ENCODE measurements at regions of chr11 and their contacts with region 1.

Region 1: DNA sequence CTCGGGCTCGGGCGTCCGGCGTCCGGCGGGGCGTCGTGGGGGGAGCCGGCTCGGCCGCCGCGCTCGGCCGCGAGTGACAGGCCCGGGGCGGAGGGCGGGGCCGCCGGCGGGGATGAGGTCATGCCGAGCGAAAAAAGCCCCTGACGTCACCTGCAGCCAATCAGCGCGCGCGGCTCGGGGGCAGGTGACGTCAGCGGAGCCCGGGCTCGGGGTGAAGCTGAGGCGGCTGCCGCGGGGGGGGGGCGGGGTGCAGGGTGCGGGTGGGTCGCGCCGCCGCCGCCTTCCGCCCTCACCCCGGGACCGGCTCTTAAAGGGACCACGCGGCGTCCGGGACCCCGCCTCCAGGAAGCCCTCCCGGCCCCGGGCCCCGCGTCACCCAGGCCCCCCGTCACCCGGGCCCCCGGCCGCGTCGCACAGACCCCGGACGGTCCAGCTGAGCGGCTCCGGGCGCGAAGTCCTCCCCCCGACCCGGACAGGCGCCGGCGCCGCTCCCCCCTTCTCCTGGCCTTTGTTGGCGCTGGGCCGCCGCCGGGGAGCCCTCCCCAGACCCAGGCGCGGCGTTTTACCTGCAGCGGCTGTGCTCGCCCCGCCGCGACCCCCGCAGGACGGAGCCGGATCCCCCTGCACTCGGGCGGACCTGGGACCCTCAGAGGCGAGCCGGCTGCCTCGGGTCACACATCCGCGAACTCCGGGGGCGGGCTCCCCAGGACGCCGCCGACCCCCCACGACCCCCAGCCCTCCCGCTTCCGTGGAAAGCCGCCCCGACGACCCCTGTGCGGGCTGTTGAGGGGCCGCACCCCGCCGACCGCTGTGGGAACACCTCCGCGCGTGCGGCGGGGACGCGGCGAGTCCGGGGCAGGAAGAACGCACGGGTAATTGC is at the start of gene DUSP8:
- DNase-seq: peak; percentile 91 to 97 (median 94)
- ATAC-seq: peak; percentile 74
- H3K4me3 ChIP-seq: peak within 1 kb of the TSS; percentile 63
- H3K4me3 Mint-ChIP-seq: peak within 1 kb of the TSS; percentile 7 to 87 (median 82)
- H3K27ac ChIP-seq: peak within 1 kb of the TSS; percentile 90
- H3K27ac Mint-ChIP-seq: peak within 1 kb of the TSS in 7 of 9 donors; percentile 43 to 91 (median 84)
- H3K4me1 ChIP-seq: peaks cover 25 to 32% of the 10 kb centered on the region in 2 donors
- H3K4me1 Mint-ChIP-seq: peaks cover 2 to 22% (median 9%) of the 10 kb centered on the region in 7 donors
- H3K27me3 ChIP-seq: no peaks in the 10 kb centered on the region
- H3K27me3 Mint-ChIP-seq: peaks cover 0 to 41% (median 3%) of the 10 kb centered on the region in 5 donors
- total RNA-seq, gene DUSP8: 0.41 to 79.3 (median 4.4) TPM

Region 2: DNA sequence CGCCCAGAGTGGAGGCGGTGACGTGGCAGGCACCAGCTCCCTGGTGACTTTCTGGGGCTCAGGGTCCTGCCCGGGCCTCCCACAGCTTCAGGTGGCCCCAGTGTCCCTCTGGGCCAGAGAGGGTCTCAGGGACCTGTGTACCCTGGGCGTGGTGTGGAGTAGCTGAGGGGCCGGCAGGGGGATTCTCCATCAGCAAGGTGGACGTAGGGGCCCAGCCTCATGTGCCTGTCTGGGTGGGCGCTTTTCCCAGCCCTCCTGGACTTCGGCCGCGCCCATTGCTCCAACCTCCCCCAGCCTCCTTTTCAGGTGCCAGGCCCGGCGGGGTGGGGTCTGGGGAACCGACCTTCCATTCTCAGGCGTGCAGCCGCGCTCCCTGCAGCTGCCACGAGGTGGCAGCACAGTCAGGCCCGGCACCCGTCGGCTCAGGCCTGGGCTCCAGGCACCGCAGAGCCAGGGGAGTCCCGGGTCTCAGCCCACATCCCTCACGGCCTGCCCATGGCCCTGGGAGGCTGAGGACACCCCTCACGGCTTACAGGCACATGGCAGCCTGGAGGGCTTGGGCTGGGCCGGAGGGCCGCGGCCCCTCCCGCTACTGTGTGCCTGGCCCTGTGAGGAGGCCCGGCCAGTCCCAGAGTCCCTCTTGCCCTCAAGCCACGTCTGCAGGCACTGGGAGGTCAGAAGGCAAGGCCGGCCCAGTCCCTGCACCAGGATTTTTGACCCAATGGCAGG is 369.5 kb before region 1 on chr11:
- CTCF ChIA-PET with region 1: interaction called, 5 read pairs
- POLR2A ChIA-PET with region 1: no interaction called
- intact Hi-C with region 1: loop called in 1 of 2 experiments (anchors 1 kb)
- DNase-seq: peak in 8 of 9 donors; percentile 34 to 73 (median 60)
- ATAC-seq: peak; percentile 83
- H3K4me3 ChIP-seq: no peak overlapping the region
- H3K4me3 Mint-ChIP-seq: no peak overlapping the region
- H3K27ac ChIP-seq: no peak overlapping the region
- H3K27ac Mint-ChIP-seq: no peak overlapping the region
- H3K4me1 ChIP-seq: no peaks in the 10 kb centered on the region
- H3K4me1 Mint-ChIP-seq: no peaks in the 10 kb centered on the region
- H3K27me3 ChIP-seq: no peaks in the 10 kb centered on the region
- H3K27me3 Mint-ChIP-seq: no peaks in the 10 kb centered on the region

Region 3: GRCh38 chr11:1309498-1310317 is 262.7 kb before region 1 on chr11 and contains the start of gene TOLLIP:
- CTCF ChIA-PET with region 1: no interaction called
- POLR2A ChIA-PET with region 1: no interaction called
- intact Hi-C with region 1: loop called (anchors 1 to 5 kb)
- DNase-seq: peak; percentile 94 to 100 (median 99)
- ATAC-seq: peak; percentile 86
- H3K4me3 ChIP-seq: peak within 1 kb of the TSS; percentile 76
- H3K4me3 Mint-ChIP-seq: peak within 1 kb of the TSS; percentile 80 to 92 (median 88)
- H3K27ac ChIP-seq: peak within 1 kb of the TSS; percentile 86
- H3K27ac Mint-ChIP-seq: peak within 1 kb of the TSS; percentile 87 to 97 (median 94)
- H3K4me1 ChIP-seq: peaks cover 31 to 35% of the 10 kb centered on the region in 2 donors
- H3K4me1 Mint-ChIP-seq: peaks cover 32 to 55% (median 43%) of the 10 kb centered on the region in 7 donors
- H3K27me3 ChIP-seq: no peaks in the 10 kb centered on the region
- H3K27me3 Mint-ChIP-seq: peaks cover 0 to 24% (median 0%) of the 10 kb centered on the region in 5 donors
- total RNA-seq, gene TOLLIP: 39.8 to 63.8 (median 48.7) TPM

Region 4: DNA sequence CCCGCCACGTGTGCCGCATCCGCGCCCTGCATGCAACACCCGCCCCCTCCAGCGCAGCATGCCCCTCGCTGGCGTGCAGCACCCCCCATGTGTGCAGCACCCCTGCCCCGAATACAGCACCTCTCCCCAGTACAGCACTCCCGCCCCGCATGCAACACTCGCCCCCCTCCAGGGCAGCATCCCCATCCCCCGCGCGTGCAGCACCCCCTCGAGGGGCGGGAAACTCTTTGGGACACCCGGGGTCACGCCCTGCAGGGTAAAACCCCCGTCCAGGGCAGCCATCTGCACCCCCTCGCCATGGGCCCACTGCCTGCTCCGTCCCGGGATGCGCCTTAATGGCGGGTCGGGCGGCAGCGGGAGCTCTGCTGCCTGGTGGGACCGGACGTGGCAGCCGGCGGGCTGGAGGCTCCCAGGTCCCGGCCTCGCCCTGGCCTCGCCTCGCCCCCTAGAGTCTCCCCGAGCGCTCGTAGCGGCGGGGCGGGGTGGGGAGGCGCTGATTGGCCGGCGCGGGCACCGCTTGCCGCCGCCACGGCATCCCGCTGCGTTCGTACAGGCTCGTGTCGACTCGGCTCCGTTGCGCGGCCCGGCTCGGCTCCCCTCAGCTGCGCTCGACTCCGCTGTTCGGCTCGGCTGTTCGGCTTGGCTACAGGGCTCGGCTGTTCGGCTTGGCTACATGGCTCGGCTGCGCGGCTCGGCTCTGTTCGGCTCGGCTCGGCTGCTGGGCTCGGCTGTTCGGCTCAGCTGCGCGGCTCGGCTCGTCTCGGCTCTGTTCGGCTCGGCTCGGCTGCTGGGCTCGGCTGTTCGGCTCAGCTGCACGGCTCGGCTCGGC is 183.1 kb before region 1 on chr11:
- CTCF ChIA-PET with region 1: no interaction called
- POLR2A ChIA-PET with region 1: no interaction called
- intact Hi-C with region 1: loop called in 1 of 2 experiments (anchors 2 kb)
- DNase-seq: peak; percentile 92 to 98 (median 98)
- ATAC-seq: peak; percentile 97
- H3K4me3 ChIP-seq: peak overlapping the region; percentile 64
- H3K4me3 Mint-ChIP-seq: peak overlapping the region; percentile 62 to 86 (median 76)
- H3K27ac ChIP-seq: peak overlapping the region; percentile 60
- H3K27ac Mint-ChIP-seq: peak overlapping the region in 3 of 9 donors; percentile 19 to 76 (median 55)
- H3K4me1 ChIP-seq: peaks cover 7 to 8% of the 10 kb centered on the region in 2 donors
- H3K4me1 Mint-ChIP-seq: peaks cover 0 to 15% (median 10%) of the 10 kb centered on the region in 7 donors
- H3K27me3 ChIP-seq: no peaks in the 10 kb centered on the region
- H3K27me3 Mint-ChIP-seq: peaks cover 23 to 55% (median 26%) of the 10 kb centered on the region in 5 donors

Region 5: GRCh38 chr11:1534682-1535081 is 37.8 kb before region 1 on chr11:
- CTCF ChIA-PET with region 1: interaction called, 6 read pairs
- POLR2A ChIA-PET with region 1: interaction called, 3 read pairs
- intact Hi-C with region 1: loop called (anchors 5 kb)
- DNase-seq: no peak
- ATAC-seq: no peak
- H3K4me3 ChIP-seq: no peak overlapping the region
- H3K4me3 Mint-ChIP-seq: peak overlapping the region in 1 of 10 donors; percentile 6
- H3K27ac ChIP-seq: no peak overlapping the region
- H3K27ac Mint-ChIP-seq: no peak overlapping the region
- H3K4me1 ChIP-seq: peaks cover 15 to 25% of the 10 kb centered on the region in 2 donors
- H3K4me1 Mint-ChIP-seq: peaks cover 10 to 60% (median 47%) of the 10 kb centered on the region in 7 donors
- H3K27me3 ChIP-seq: no peaks in the 10 kb centered on the region
- H3K27me3 Mint-ChIP-seq: peaks cover 0 to 6% (median 0%) of the 10 kb centered on the region in 5 donors

Region 6: GRCh38 chr11:1589996-1590395 is 17.6 kb after region 1 on chr11:
- CTCF ChIA-PET with region 1: interaction called, 9 read pairs
- POLR2A ChIA-PET with region 1: interaction called, 26 read pairs
- intact Hi-C with region 1: no loop called
- DNase-seq: no peak
- ATAC-seq: no peak
- H3K4me3 ChIP-seq: no peak overlapping the region
- H3K4me3 Mint-ChIP-seq: peak overlapping the region in 6 of 10 donors; percentile 12 to 44 (median 32)
- H3K27ac ChIP-seq: no peak overlapping the region
- H3K27ac Mint-ChIP-seq: peak overlapping the region in 4 of 9 donors; percentile 9 to 71 (median 40)
- H3K4me1 ChIP-seq: peaks cover 19 to 21% of the 10 kb centered on the region in 2 donors
- H3K4me1 Mint-ChIP-seq: peaks cover 12 to 31% (median 22%) of the 10 kb centered on the region in 7 donors
- H3K27me3 ChIP-seq: no peaks in the 10 kb centered on the region
- H3K27me3 Mint-ChIP-seq: peaks cover 0 to 52% (median 15%) of the 10 kb centered on the region in 5 donors

Region 7: GRCh38 chr11:1852877-1853276 is 280.4 kb after region 1 on chr11 and contains the start of gene LSP1:
- CTCF ChIA-PET with region 1: no interaction called
- POLR2A ChIA-PET with region 1: no interaction called
- intact Hi-C with region 1: loop called in 1 of 2 experiments (anchors 10 kb)
- DNase-seq: peak in 8 of 9 donors; percentile 78 to 89 (median 84)
- ATAC-seq: peak; percentile 69
- H3K4me3 ChIP-seq: peak within 1 kb of the TSS; percentile 94
- H3K4me3 Mint-ChIP-seq: peak within 1 kb of the TSS; percentile 91 to 100 (median 97)
- H3K27ac ChIP-seq: peak within 1 kb of the TSS; percentile 80
- H3K27ac Mint-ChIP-seq: peak within 1 kb of the TSS; percentile 94 to 99 (median 97)
- H3K4me1 ChIP-seq: peaks cover 58 to 66% of the 10 kb centered on the region in 2 donors
- H3K4me1 Mint-ChIP-seq: peaks cover 31 to 72% (median 48%) of the 10 kb centered on the region in 7 donors
- H3K27me3 ChIP-seq: no peaks in the 10 kb centered on the region
- H3K27me3 Mint-ChIP-seq: peaks cover 0 to 4% (median 0%) of the 10 kb centered on the region in 5 donors
- total RNA-seq, gene LSP1: 248 to 578 (median 289) TPM

Region 8: GRCh38 chr11:1917671-1918516 is 345.5 kb after region 1 on chr11:
- CTCF ChIA-PET with region 1: no interaction called
- POLR2A ChIA-PET with region 1: no interaction called
- intact Hi-C with region 1: no loop called
- DNase-seq: peak in 1 of 9 donors; percentile 19
- ATAC-seq: peak; percentile 50
- H3K4me3 ChIP-seq: no peak overlapping the region
- H3K4me3 Mint-ChIP-seq: no peak overlapping the region
- H3K27ac ChIP-seq: no peak overlapping the region
- H3K27ac Mint-ChIP-seq: peak overlapping the region in 1 of 9 donors; percentile 5
- H3K4me1 ChIP-seq: no peaks in the 10 kb centered on the region
- H3K4me1 Mint-ChIP-seq: peaks cover 9 to 32% (median 15%) of the 10 kb centered on the region in 7 donors
- H3K27me3 ChIP-seq: no peaks in the 10 kb centered on the region
- H3K27me3 Mint-ChIP-seq: peaks cover 0 to 15% (median 11%) of the 10 kb centered on the region in 5 donors